Mammary epithelial cell (primary cell): ENCODE measurements at regions of chr17 and their contacts with region 1.

Region 1: GRCh38 chr17:64262417-64263260 is at the start of gene TEX2:
- DNase-seq: peak; percentile 25
- H3K4me3 ChIP-seq: peak within 1 kb of the TSS; percentile 53 to 94 (median 85)
- H3K27ac ChIP-seq: peak within 1 kb of the TSS; percentile 72
- H3K4me1 ChIP-seq: peaks cover 46% of the 10 kb centered on the region
- H3K27me3 ChIP-seq: no peaks in the 10 kb centered on the region
- CTCF ChIP-seq: no peak
- total RNA-seq, gene TEX2: 72.6 to 127 TPM

Region 2: GRCh38 chr17:64081802-64082799 is 180.5 kb before region 1 on chr17:
- CTCF ChIA-PET with region 1: no interaction called
- dilution Hi-C with region 1: no loop called
- in situ Hi-C with region 1: no loop called
- intact Hi-C with region 1: no loop called
- DNase-seq: peak; percentile 83
- H3K4me3 ChIP-seq: no peak overlapping the region
- H3K27ac ChIP-seq: peak overlapping the region; percentile 79
- H3K4me1 ChIP-seq: peaks cover 32% of the 10 kb centered on the region
- H3K27me3 ChIP-seq: no peaks in the 10 kb centered on the region
- CTCF ChIP-seq: no peak

Region 3: DNA sequence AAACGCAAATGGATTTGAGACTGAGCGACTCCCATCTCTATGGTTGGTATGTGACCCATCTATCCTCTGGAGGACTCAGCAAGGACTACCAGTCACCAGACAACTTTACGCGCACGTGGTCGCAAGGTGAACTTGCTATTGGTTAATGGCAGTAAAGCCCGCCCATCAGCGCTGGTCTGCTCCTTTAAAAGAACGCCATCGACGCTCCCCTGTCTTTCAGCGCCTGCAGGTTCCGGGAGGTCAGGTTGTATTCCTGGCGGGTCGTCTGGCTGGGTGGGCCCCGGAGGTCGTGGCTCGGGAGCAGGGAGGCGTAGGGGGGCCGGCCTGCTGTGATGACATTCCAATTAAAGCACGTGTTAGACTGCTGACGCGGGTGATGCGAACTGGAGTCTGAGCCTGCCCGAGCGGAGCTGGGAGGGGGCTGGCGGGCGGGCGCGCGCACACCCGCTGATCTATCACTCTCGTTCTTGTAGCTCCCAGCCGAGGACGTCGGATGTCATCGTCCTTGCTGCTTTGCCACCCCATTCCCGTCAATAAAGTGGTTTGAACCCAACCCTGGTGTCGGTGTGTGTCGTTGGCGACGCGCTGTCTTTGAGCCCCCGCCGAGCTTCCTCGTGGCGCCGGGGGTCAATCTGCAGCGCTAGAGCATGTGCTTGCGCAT is 116.8 kb before region 1 on chr17:
- CTCF ChIA-PET with region 1: no interaction called
- dilution Hi-C with region 1: no loop called
- in situ Hi-C with region 1: no loop called
- intact Hi-C with region 1: loop called (anchors 2 kb)
- DNase-seq: peak; percentile 98
- H3K4me3 ChIP-seq: peak overlapping the region; percentile 76 to 89 (median 79)
- H3K27ac ChIP-seq: peak overlapping the region; percentile 76
- H3K4me1 ChIP-seq: peaks cover 8% of the 10 kb centered on the region
- H3K27me3 ChIP-seq: no peaks in the 10 kb centered on the region
- CTCF ChIP-seq: no peak

Region 4: DNA sequence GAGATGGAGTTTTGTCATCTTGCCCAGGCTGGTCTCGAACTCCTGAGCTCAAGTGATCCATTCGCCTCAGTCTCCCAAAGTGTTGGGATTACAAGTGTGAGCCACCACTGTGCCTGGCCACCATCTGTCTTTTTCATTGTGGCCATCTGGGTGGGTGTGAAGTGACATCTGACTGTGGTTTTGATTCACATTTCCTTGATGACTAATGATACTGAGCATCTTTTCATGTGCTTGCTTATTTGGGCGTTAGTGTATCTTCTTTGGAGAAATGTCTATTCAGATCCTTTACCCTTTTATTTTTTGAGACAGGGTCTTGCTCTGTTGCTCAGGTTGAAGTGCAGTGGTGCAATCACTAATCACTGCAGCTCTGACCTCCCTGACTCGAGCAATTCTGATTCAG is 78.8 kb before region 1 on chr17:
- CTCF ChIA-PET with region 1: no interaction called
- dilution Hi-C with region 1: no loop called
- in situ Hi-C with region 1: no loop called
- intact Hi-C with region 1: loop called (anchors 5 kb)
- DNase-seq: peak; percentile 41
- H3K4me3 ChIP-seq: no peak overlapping the region
- H3K27ac ChIP-seq: no peak overlapping the region
- H3K4me1 ChIP-seq: peaks cover 3% of the 10 kb centered on the region
- H3K27me3 ChIP-seq: no peaks in the 10 kb centered on the region
- CTCF ChIP-seq: no peak

Region 5: DNA sequence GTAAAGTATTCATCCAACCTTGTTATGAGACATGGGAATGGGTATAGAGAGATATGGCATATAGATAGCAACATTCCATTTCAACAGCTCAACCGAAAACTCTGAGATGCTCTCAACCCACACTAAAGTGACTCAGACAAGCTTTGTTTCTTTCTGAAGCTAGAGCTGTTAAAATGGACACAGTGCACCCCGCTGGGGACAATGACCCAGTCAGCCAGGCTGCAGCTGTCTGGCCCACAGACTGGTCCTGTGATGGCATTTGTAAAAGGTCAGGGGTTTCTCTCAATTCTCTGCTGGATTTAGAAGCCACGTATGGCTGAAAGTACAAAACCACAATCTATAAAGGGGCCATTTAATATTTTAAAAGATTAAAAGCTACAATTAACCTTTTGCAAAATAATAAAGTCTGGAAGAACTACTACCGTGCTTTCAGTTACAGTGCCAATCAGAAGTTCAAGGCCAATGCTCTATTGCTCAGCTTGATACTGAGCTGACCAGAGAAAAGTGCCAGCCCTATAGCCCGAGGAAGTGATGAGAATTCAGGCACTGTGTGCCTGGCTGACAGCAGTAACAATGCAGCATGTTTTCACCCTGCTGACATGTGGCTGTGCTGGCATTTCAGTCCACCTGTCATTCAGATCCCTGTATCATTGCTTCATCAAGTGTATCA is 59.8 kb before region 1 on chr17:
- CTCF ChIA-PET with region 1: no interaction called
- dilution Hi-C with region 1: no loop called
- in situ Hi-C with region 1: no loop called
- intact Hi-C with region 1: loop called (anchors 5 kb)
- DNase-seq: peak; percentile 83
- H3K4me3 ChIP-seq: no peak overlapping the region
- H3K27ac ChIP-seq: peak overlapping the region; percentile 42
- H3K4me1 ChIP-seq: peaks cover 41% of the 10 kb centered on the region
- H3K27me3 ChIP-seq: no peaks in the 10 kb centered on the region
- CTCF ChIP-seq: no peak

Region 6: GRCh38 chr17:64216338-64217248 is 46.0 kb before region 1 on chr17:
- CTCF ChIA-PET with region 1: interaction called, 8 read pairs
- dilution Hi-C with region 1: no loop called
- in situ Hi-C with region 1: no loop called
- intact Hi-C with region 1: loop called (anchors 5 kb)
- DNase-seq: peak; percentile 40
- H3K4me3 ChIP-seq: no peak overlapping the region
- H3K27ac ChIP-seq: peak overlapping the region; percentile 20
- H3K4me1 ChIP-seq: peaks cover 26% of the 10 kb centered on the region
- H3K27me3 ChIP-seq: no peaks in the 10 kb centered on the region
- CTCF ChIP-seq: no peak

Region 7: GRCh38 chr17:64230795-64231408 is 31.7 kb before region 1 on chr17:
- CTCF ChIA-PET with region 1: no interaction called
- dilution Hi-C with region 1: no loop called
- in situ Hi-C with region 1: no loop called
- intact Hi-C with region 1: loop called (anchors 1 kb)
- DNase-seq: peak; percentile 97
- H3K4me3 ChIP-seq: no peak overlapping the region
- H3K27ac ChIP-seq: peak overlapping the region; percentile 67
- H3K4me1 ChIP-seq: peaks cover 32% of the 10 kb centered on the region
- H3K27me3 ChIP-seq: no peaks in the 10 kb centered on the region
- CTCF ChIP-seq: peak in 1 of 2 donors; percentile 32

Region 8: GRCh38 chr17:64306850-64307463 is 44.3 kb after region 1 on chr17:
- CTCF ChIA-PET with region 1: no interaction called
- dilution Hi-C with region 1: no loop called
- in situ Hi-C with region 1: no loop called
- intact Hi-C with region 1: no loop called
- DNase-seq: peak; percentile 33
- H3K4me3 ChIP-seq: no peak overlapping the region
- H3K27ac ChIP-seq: no peak overlapping the region
- H3K4me1 ChIP-seq: peaks cover 4% of the 10 kb centered on the region
- H3K27me3 ChIP-seq: no peaks in the 10 kb centered on the region
- CTCF ChIP-seq: peak; percentile 73 to 84

Region 9: DNA sequence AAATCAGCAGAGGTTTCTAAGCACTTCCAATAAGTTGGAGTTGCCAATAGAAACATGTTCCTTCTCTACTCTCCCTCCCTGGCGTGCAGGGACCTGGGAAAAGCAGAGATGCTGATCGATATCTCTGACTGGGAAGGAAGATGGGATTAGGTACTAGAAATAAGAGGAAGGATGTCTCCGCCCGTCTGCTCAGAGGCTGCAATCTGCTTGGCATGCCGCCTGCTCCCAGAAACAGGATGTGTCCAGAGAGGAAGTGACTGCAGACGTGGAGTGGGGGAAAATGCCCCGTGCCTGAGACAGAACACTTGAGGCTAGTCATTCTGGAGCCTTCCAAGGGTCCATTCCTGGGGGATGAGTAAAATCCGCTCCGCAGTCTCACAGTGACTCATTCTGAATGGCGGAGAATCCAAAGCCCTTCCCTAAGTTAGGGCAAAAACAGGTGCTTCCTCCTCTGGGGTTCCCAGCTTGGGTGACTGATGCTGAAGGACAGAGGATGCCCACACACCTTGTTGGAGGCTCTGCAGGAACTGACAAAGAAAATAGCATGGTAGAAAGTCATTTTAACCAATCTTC is 444.5 kb after region 1 on chr17:
- CTCF ChIA-PET with region 1: no interaction called
- dilution Hi-C with region 1: no loop called
- in situ Hi-C with region 1: no loop called
- intact Hi-C with region 1: no loop called
- DNase-seq: peak; percentile 100
- H3K4me3 ChIP-seq: peak overlapping the region in 2 of 3 experiments; percentile 12 to 29
- H3K27ac ChIP-seq: peak overlapping the region; percentile 95
- H3K4me1 ChIP-seq: peaks cover 39% of the 10 kb centered on the region
- H3K27me3 ChIP-seq: no peaks in the 10 kb centered on the region
- CTCF ChIP-seq: no peak